Calu3 (cell line): ENCODE measurements at regions of chr12 and their contacts with region 1.

Region 1: DNA sequence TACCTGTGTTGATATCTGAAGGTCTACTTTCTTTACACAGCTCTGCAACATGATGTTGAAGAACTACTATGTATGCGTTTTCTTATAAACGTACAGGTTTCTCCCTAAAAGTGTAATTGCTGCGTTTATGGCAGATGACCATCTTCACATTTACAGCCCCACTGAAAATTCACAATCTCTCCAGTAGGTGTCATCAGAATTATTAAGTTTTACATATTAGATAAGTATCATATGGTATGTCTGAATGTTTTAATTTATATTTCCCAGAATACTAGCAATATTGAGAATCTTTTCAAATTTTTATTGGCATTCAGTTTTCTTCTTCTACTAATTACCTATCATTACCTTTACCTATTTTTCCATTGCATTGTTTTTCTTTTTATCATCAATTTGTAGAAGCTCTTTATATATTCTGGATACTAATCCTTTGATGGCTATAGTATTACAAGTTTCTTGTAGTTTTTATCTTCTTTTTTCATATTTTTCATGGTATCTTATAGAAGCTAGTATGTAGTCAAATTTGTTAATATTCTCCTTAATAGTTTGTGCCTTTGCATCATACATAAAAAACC is 123.5 kb downstream of the CAPZA3 start:
- DNase-seq: peak; percentile 10
- H3K4me3 Mint-ChIP-seq: no peak overlapping the region
- H3K27ac Mint-ChIP-seq: peak overlapping the region; percentile 11
- H3K4me1 Mint-ChIP-seq: peaks cover 21% of the 10 kb centered on the region
- H3K27me3 Mint-ChIP-seq: no peaks in the 10 kb centered on the region
- CTCF ChIP-seq: peak; percentile 50

Region 2: GRCh38 chr12:18700271-18700670 is 161.1 kb before region 1 on chr12:
- CTCF ChIA-PET with region 1: no interaction called
- intact Hi-C with region 1: no loop called
- DNase-seq: no peak
- H3K4me3 Mint-ChIP-seq: no peak overlapping the region
- H3K27ac Mint-ChIP-seq: no peak overlapping the region
- H3K4me1 Mint-ChIP-seq: peaks cover 15% of the 10 kb centered on the region
- H3K27me3 Mint-ChIP-seq: no peaks in the 10 kb centered on the region
- CTCF ChIP-seq: no peak

Region 3: DNA sequence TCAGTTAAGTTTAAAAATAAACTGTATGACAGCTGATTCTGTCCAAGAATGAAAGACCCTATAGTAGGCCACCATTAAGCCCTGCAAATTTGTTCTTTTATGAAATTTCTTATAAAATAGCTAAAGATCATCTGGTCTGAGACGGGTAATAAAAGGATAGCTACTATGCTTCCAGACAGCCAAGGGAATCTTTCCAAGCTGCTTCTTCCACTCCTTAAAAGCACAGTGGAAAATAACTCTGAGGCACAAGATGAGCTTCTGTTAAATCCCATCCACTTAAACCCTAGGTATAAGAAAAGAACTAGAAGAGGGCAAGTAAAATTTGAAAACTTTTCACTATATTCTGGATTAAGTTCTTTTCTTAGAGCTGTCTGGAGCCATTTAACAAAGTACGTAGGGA is 70.8 kb after region 1 on chr12:
- CTCF ChIA-PET with region 1: no interaction called
- intact Hi-C with region 1: no loop called
- DNase-seq: no peak
- H3K4me3 Mint-ChIP-seq: no peak overlapping the region
- H3K27ac Mint-ChIP-seq: no peak overlapping the region
- H3K4me1 Mint-ChIP-seq: no peaks in the 10 kb centered on the region
- H3K27me3 Mint-ChIP-seq: no peaks in the 10 kb centered on the region
- CTCF ChIP-seq: no peak

Region 4: GRCh38 chr12:19018302-19018970 is 157.1 kb after region 1 on chr12:
- CTCF ChIA-PET with region 1: no interaction called
- intact Hi-C with region 1: loop called (anchors 10 kb)
- DNase-seq: peak; percentile 12
- H3K4me3 Mint-ChIP-seq: no peak overlapping the region
- H3K27ac Mint-ChIP-seq: peak overlapping the region; percentile 74
- H3K4me1 Mint-ChIP-seq: peaks cover 41% of the 10 kb centered on the region
- H3K27me3 Mint-ChIP-seq: no peaks in the 10 kb centered on the region
- CTCF ChIP-seq: no peak

Region 5: DNA sequence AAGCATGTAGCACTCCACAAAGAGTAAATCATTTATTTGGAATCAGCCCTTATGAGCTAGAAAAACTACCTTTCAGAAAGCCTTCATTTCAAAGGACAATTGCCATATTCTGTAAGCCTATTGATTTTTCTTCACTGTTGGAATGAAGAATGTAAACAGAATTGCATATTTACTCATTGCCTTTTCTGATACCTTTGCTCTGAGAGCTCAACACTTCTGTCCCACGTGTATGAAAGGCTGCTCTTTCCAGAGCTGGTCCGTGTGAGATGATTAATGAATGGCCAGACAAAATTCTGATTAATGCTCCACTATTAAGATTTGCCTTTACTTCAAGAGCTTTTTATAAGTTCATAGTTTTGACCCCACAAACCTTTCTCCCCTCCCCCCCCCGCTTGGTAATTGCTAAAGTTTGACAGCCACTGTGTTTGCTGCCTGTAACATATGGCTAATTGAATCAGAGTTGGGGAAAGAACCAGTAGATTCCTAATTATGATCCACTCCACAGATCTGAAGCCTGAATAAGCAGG is 205.2 kb after region 1 on chr12:
- CTCF ChIA-PET with region 1: interaction called, 3 read pairs
- intact Hi-C with region 1: loop called (anchors 5 kb)
- DNase-seq: peak; percentile 48
- H3K4me3 Mint-ChIP-seq: peak overlapping the region; percentile 60
- H3K27ac Mint-ChIP-seq: peak overlapping the region; percentile 93
- H3K4me1 Mint-ChIP-seq: peaks cover 36% of the 10 kb centered on the region
- H3K27me3 Mint-ChIP-seq: no peaks in the 10 kb centered on the region
- CTCF ChIP-seq: no peak

Region 6: GRCh38 chr12:19186722-19187661 is 325.6 kb after region 1 on chr12:
- CTCF ChIA-PET with region 1: no interaction called
- intact Hi-C with region 1: loop called (anchors 1 kb)
- DNase-seq: peak; percentile 17
- H3K4me3 Mint-ChIP-seq: no peak overlapping the region
- H3K27ac Mint-ChIP-seq: peak overlapping the region; percentile 36
- H3K4me1 Mint-ChIP-seq: peaks cover 64% of the 10 kb centered on the region
- H3K27me3 Mint-ChIP-seq: no peaks in the 10 kb centered on the region
- CTCF ChIP-seq: peak; percentile 45

Region 7: GRCh38 chr12:19288603-19289244 is 427.4 kb after region 1 on chr12:
- CTCF ChIA-PET with region 1: no interaction called
- intact Hi-C with region 1: loop called (anchors 5 kb)
- DNase-seq: no peak
- H3K4me3 Mint-ChIP-seq: no peak overlapping the region
- H3K27ac Mint-ChIP-seq: no peak overlapping the region
- H3K4me1 Mint-ChIP-seq: no peaks in the 10 kb centered on the region
- H3K27me3 Mint-ChIP-seq: no peaks in the 10 kb centered on the region
- CTCF ChIP-seq: no peak

Region 8: DNA sequence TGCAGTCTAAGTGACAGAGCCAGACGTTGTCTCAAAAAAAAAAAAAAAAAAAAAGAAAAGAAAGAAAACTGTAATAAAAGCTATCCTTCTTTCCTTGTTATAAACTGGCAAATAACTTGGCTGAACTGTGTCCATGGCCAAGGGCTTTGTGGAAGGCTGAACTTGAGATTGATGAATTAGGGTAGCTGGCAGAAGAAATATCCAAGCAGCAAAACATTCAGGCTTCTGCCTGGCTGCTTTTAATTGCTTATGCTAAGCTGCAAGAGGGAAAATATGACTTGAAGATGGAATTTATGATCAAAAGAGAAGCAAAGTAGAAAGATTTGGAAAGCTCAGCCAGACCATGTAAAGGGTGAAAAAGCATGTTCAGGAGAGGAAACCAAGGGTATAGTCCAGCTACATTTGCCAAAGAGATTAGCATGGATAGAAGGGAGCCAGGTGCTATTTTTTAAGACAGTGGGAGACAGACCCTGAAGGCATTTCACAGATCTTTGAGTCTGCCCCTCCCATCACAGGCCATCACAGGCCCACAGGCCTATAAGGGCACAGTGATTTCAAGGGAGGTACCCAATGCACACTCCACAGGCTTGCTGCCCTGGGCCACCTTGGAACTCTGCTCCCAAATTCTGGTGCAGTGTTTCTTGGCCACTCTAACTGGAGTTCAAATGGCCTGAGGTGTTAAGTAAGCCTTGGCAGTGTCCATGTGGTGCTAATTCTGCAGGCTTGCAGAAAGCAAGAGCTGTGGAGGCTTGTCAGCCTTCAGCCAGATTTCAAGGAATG is 803.9 kb after region 1 on chr12:
- CTCF ChIA-PET with region 1: no interaction called
- intact Hi-C with region 1: no loop called
- DNase-seq: no peak
- H3K4me3 Mint-ChIP-seq: no peak overlapping the region
- H3K27ac Mint-ChIP-seq: no peak overlapping the region
- H3K4me1 Mint-ChIP-seq: no peaks in the 10 kb centered on the region
- H3K27me3 Mint-ChIP-seq: no peaks in the 10 kb centered on the region
- CTCF ChIP-seq: no peak